ENCODE measurements at regions of chr2 and their contacts with region 1.

Region 1: DNA sequence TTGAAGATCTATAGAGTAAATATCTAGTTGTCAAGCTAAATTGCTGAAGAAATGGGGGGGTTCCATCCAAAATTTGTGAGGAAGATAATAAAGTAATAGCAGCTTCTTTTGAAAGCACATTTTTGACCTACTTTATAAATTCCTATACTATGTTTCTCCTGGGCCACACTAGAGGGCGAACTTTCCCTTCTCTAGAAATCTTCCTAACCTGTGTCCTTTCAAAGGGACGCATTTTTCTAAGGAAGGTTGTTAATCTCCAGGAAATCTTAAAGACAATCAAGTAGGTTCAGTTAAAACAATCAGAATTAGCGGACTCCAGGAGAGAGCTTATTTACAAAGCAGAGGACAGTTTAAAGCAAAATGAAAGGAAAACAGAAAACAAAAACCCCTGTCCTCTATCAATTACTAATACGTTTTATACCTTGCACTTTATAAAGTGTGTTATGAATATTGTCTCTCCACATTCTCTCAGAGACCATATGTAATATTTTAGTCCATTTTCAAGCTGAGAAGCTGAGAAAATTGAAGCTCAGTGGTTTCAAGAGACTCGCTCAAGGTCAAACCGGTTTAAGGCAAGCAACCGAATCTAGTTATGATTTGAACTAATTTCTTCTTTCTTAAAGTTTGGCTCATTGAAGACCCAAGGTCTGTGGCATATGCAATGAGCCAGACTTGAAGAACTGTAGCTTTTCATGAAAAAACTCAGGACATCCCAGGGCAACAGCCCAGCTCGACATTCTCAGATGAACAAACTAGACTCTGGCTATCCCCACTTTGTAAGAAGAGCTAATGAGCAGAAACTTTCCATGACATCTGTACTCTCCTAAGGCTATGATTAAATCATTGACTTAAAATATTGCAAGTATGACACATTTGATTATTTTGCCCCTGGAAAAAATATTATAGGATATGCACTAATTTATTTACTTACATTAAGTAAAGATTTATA is 273.6 kb downstream of the PAX3 start:
- DNase-seq: no peak

Region 2: DNA sequence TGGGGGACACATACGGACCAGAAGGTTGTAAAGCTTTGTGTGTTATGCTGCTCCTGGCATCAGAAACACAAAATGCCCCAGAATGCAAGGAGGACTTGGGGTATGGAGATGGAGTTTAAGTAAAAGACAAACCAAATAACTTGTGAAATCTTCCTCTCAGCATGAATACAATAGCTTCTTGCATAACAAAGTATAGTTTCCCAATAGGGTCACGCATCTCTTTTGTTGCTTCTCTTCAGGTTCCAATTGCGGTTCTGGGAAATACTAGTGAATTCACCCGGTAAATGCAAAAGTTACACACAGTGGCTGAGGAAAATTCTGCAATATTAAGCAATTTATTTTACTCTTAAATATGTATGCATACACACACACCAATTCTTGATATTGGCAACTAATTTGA is 113.9 kb before region 1 on chr2:
- intact Hi-C with region 1: no loop called
- DNase-seq: no peak

Region 3: DNA sequence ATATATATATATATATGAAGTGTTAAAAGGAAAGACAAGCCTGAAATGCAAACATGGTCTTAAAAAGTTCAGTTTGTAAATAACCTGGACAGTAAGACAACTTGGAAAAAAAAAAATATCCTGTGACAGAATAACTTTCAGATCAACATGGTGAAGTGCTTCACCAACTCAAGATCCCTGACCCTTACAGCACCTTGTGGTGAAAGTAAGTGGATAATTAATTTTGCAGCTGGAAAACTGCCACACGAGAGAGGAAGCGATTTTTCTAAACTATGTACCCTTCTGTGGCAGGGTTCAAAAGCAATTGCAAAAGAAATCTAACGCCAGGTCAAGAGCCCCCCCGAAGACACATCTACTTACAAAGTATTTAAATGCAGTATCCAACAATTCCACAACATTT is 177.8 kb after region 1 on chr2:
- intact Hi-C with region 1: loop called in 1 of 2 experiments (anchors 5 kb)
- DNase-seq: no peak